ENCODE measurements at regions of chr5 and their contacts with region 1.

Region 1: DNA sequence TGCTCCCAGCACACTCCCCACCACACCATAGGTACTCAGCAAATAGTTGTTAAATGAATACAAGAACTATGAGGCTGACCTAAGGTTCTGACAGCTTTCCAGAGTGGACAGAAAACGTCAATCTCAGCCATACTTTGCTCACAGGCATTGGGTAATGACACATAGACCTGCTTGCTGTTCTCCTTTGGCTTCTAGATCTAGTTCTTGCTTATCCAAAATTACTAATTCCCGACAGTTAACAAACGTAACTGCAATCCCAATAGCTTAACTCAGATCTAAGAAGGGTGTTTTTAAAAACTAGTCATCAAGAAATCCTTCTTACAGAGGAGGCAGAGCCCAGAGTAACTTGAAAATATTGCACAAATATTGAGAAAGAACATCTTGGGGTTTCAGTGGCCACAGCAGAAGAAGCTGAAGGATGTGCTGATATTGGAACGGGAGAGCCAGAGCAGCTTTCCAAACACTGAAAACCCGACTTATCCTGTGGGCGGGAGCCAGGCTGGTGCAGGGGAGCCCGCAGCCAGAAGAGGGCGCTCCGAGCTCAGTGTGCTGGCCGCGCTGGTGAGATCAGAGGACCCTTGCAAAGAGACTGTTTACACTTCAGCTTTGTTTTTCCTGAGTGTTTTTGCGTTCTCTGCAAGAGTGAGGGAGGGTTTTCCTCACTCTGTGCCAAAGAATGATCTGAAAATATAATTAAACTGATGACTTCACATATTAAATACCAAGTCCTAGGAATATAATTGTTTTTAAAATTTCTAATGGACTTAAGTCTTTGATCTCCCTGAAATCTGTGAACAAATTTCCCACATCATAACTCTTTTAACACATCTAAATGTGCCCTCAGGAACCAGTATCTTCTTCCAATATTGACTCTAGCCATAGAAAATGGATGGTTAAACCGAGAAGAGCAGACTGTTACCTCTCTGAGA is 30.3 kb downstream of the FGF1 start:
- DNase-seq: peak; percentile 52 to 78
- H3K4me3 ChIP-seq: no peak overlapping the region
- H3K27ac ChIP-seq: no peak overlapping the region
- H3K4me1 ChIP-seq: no peaks in the 10 kb centered on the region
- H3K27me3 ChIP-seq: no peaks in the 10 kb centered on the region
- CTCF ChIP-seq: peak; percentile 97

Region 2: DNA sequence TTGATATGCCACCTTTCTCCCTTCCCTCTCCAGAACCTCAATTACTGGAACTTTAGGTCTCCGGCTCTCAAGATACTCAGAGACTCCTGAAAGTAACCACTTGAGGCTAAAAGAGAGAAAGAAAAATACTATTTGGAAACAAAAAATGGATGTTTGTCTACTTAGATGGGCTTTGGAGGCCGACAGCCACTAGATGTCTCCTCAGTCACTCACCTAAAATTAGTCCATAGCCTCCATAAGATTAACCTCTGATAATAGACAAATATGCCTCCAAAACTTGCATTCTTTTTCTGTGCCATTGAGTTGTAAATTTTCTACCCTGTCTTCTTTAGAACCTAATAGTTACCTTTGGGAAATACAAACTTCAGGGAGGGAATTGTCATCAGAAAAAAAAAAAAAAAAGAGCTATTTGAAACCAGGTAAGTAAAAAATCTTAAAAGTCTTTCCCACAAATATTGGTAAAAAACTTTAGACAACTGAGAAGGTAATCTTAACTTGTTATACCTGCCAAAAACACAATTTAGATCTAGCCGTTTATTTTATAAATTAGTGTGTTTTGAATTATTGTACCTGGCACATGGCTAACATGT is 766.2 kb before region 1 on chr5:
- CTCF ChIA-PET with region 1: interaction called, 32 read pairs
- POLR2A ChIA-PET with region 1: no interaction called
- intact Hi-C with region 1: no loop called
- DNase-seq: no peak
- H3K4me3 ChIP-seq: no peak overlapping the region
- H3K27ac ChIP-seq: no peak overlapping the region
- H3K4me1 ChIP-seq: no peaks in the 10 kb centered on the region
- H3K27me3 ChIP-seq: no peaks in the 10 kb centered on the region
- CTCF ChIP-seq: peak; percentile 59; the same call in 1 of the 2 replicates

Region 3: DNA sequence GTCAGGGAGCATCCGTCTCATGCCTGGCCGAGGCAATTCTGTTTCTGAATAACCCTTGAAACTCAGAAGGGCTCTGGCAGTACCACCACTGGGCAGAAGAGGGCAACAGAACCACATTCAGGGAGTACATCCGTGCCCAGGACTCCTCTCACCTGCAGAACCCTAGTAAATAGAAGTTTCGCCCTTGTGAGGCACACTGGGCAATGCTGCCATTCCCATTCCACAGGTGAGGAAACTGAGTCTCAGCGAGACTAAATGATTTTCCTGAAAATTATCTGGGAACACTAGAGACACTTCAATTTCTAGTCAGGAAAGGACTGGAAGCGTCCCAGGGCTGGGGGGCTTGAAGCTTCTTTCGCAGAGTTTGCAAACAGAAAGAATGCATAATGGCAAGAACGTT is 44.4 kb before region 1 on chr5:
- CTCF ChIA-PET with region 1: interaction called, 7 read pairs
- POLR2A ChIA-PET with region 1: no interaction called
- intact Hi-C with region 1: loop called (anchors 1 kb)
- DNase-seq: peak; percentile 49 to 72
- H3K4me3 ChIP-seq: no peak overlapping the region
- H3K27ac ChIP-seq: no peak overlapping the region
- H3K4me1 ChIP-seq: no peaks in the 10 kb centered on the region
- H3K27me3 ChIP-seq: no peaks in the 10 kb centered on the region
- CTCF ChIP-seq: peak; percentile 79

Region 4: GRCh38 chr5:142699184-142699720 is 43.6 kb after region 1 on chr5:
- CTCF ChIA-PET with region 1: interaction called, 20 read pairs
- POLR2A ChIA-PET with region 1: no interaction called
- intact Hi-C with region 1: loop called (anchors 1 kb)
- DNase-seq: peak; percentile 73 to 80
- H3K4me3 ChIP-seq: no peak overlapping the region
- H3K27ac ChIP-seq: no peak overlapping the region
- H3K4me1 ChIP-seq: peaks cover 12% of the 10 kb centered on the region
- H3K27me3 ChIP-seq: no peaks in the 10 kb centered on the region
- CTCF ChIP-seq: peak; percentile 98

Region 5: DNA sequence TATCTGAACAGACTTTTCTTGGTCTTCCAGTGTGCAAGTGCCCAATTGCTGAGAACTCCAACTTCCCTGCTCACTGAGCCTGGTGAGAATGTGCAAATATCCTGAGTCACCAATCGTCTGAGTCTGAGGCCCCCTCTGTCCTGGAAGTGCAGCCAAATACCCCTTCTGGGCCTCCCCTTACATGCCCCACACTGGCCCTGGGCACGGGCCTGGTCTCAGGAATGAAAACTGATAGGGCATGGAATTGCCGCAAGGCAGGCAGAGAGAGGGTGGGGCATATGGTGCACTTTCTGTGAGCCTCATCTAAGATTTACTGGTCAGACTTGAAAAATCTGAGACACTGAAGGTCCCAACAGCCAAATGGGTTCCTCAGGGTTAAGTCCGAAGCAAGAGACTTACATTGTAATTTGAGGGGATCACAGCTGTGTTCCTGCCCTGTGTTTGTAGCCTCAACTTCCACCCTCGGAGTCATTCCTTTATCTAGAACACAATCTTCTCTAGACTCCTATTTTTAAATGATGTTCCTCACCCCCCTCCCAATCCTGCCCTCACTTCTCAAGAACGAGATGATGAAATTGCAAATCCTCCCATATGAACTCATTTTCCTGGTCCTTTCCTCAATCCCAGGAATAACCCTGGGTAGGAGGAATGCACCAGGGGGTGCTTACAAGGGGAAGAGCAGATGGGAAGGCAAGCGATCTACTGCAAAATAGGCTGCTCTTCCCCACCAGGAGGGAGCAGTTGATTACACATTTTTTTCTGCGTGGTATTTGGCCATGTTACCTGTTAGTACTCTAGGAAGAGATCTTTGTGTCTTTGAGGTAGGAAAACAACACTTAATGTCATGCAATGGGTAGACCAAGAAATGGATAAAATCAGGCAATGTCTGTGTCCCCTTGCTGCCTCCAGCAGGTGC is 80.0 kb after region 1 on chr5:
- CTCF ChIA-PET with region 1: no interaction called
- POLR2A ChIA-PET with region 1: no interaction called
- intact Hi-C with region 1: no loop called
- DNase-seq: peak in 1 of 2 experiments; percentile 40
- H3K4me3 ChIP-seq: no peak overlapping the region
- H3K27ac ChIP-seq: no peak overlapping the region
- H3K4me1 ChIP-seq: peaks cover 20% of the 10 kb centered on the region
- H3K27me3 ChIP-seq: no peaks in the 10 kb centered on the region
- CTCF ChIP-seq: no peak

Region 6: GRCh38 chr5:142888469-142889085 is 233.0 kb after region 1 on chr5:
- CTCF ChIA-PET with region 1: interaction called, 9 read pairs
- POLR2A ChIA-PET with region 1: no interaction called
- intact Hi-C with region 1: loop called (anchors 2 kb)
- DNase-seq: peak; percentile 28 to 50
- H3K4me3 ChIP-seq: no peak overlapping the region
- H3K27ac ChIP-seq: no peak overlapping the region
- H3K4me1 ChIP-seq: peaks cover 28% of the 10 kb centered on the region
- H3K27me3 ChIP-seq: no peaks in the 10 kb centered on the region
- CTCF ChIP-seq: peak; percentile 83

Region 7: GRCh38 chr5:144191998-144192397 is 1536.4 kb after region 1 on chr5:
- CTCF ChIA-PET with region 1: no interaction called
- POLR2A ChIA-PET with region 1: no interaction called
- intact Hi-C with region 1: loop called (anchors 5 kb)
- DNase-seq: peak in 1 of 2 experiments; percentile 56
- H3K4me3 ChIP-seq: peak overlapping the region; percentile 21; the same call in 1 of the 2 replicates
- H3K27ac ChIP-seq: no peak overlapping the region
- H3K4me1 ChIP-seq: peaks cover 20% of the 10 kb centered on the region
- H3K27me3 ChIP-seq: no peaks in the 10 kb centered on the region
- CTCF ChIP-seq: peak; percentile 49; the same call in 1 of the 2 replicates

Measured in PC-9 (cell line).